ENCODE measurements at regions of chr9 and their contacts with region 1.

Region 1: GRCh38 chr9:137605121-137606004 is at the start of gene ARRDC1:
- DNase-seq: peak; percentile 96
- H3K4me3 Mint-ChIP-seq: peak within 1 kb of the TSS; percentile 78
- H3K27ac Mint-ChIP-seq: no peak within 1 kb of the TSS
- H3K4me1 Mint-ChIP-seq: peaks cover 20% of the 10 kb centered on the region
- H3K27me3 Mint-ChIP-seq: no peaks in the 10 kb centered on the region
- total RNA-seq, gene ARRDC1: 38.2 to 40.5 TPM

Region 2: DNA sequence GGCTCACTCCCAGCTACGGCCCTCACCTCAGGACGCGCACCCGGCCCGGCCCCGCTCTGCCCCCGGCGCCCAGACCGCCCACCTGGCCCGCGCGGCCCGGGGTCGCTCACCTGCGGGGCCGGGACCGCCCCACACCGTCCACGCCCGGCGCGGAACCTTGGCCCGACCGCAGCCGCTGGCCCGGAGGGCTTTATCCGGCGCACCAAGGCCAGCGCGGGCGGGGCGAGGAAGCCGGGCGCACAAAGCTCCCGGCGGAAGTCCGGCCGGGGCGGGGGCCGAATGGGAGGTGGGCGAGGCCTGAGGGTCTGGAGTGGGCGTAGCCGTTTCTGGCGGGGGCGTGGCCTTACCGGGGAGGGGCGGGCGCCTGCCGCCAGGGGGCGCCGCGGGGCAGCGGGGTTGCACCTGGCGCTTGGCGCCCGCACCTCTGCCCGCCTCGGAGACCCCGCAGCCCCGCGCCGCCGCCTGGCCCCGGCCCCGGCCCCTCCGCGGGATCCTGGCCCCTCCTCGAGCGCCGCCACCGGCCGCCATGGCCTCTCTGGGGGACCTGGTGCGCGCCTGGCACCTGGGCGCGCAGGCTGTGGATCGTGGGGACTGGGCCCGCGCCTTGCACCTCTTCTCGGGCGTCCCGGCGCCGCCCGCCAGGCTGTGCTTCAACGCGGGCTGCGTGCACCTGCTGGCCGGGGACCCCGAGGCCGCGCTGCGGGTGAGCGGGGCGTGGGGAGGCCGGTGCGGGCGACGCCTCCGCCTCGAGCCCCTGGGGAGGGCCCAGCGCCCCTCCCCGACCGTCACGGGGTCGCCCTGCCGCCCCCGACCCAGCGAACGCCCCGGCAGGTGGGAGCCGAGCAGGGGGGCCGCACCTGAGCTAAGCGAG is 182.1 kb before region 1 on chr9 and contains the starts of genes EXD3 and NOXA1:
- CTCF ChIA-PET with region 1: no interaction called
- POLR2A ChIA-PET with region 1: no interaction called
- intact Hi-C with region 1: loop called (anchors 1 kb)
- DNase-seq: peak; percentile 96
- H3K4me3 Mint-ChIP-seq: peak within 1 kb of the TSS; percentile 83
- H3K27ac Mint-ChIP-seq: peak within 1 kb of the TSS; percentile 71
- H3K4me1 Mint-ChIP-seq: peaks cover 8% of the 10 kb centered on the region
- H3K27me3 Mint-ChIP-seq: no peaks in the 10 kb centered on the region
- total RNA-seq, gene EXD3: 13.5 to 13.6 TPM
- total RNA-seq, gene NOXA1: 1.1 TPM

Region 3: GRCh38 chr9:137578518-137579258 is 26.7 kb before region 1 on chr9 and contains the start of gene DPH7:
- CTCF ChIA-PET with region 1: interaction called, 4 read pairs
- POLR2A ChIA-PET with region 1: no interaction called
- intact Hi-C with region 1: loop called (anchors 1 kb)
- DNase-seq: peak; percentile 96
- H3K4me3 Mint-ChIP-seq: peak within 1 kb of the TSS; percentile 71
- H3K27ac Mint-ChIP-seq: peak within 1 kb of the TSS; percentile 4
- H3K4me1 Mint-ChIP-seq: peaks cover 37% of the 10 kb centered on the region
- H3K27me3 Mint-ChIP-seq: no peaks in the 10 kb centered on the region
- total RNA-seq, gene DPH7: 26.6 to 30.3 TPM

Region 4: DNA sequence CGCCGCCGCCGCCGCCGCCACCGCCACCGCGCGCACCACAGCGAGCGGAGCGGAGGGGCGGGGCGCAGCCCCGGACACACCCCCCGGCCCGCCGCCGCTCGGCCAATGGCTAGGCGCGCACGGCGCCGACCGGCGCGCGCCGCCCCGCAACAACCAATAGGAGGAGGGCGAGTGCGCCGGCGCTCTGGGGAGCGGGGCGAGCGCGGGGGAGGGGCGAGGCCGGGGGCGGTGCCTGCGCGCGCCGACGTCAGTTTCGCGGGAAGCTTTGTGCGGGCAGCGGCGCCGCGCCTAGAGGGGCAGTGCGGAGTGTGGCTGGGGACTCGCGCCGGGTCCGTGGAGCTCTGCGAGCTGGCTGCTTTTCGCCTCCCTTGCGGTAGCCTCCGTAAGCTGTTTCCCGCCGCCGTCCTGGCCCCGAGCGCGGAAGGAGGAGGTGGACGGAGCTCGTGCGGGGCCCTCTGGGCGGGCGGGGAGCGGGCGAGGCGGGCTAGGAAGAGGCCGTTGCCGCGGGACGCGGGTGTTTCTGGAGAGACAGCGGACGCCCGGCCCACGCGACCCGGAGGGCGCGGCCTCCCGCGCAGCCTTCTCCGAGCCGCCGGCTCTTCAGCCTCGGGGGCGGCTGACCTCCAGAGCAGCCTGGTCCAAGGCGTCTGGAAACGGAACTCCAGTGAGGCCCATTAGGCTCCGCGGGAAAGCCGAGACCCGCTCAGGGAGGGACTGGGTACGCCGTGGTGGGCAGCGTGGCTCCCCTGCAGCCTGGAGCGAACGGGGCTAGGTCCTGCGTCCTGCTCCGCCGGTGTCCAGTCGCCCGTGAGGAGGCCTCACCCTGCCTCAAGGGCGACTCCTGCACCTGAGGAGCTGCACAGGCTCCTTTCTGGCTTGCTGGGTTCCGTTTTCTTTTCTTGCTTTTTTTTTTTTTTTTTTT is 14.6 kb before region 1 on chr9 and contains the start of gene ZMYND19:
- CTCF ChIA-PET with region 1: interaction called, 4 read pairs
- POLR2A ChIA-PET with region 1: interaction called, 3 read pairs
- intact Hi-C with region 1: loop called (anchors 1 kb)
- DNase-seq: peak; percentile 91
- H3K4me3 Mint-ChIP-seq: peak within 1 kb of the TSS; percentile 98
- H3K27ac Mint-ChIP-seq: peak within 1 kb of the TSS; percentile 86
- H3K4me1 Mint-ChIP-seq: peaks cover 22% of the 10 kb centered on the region
- H3K27me3 Mint-ChIP-seq: no peaks in the 10 kb centered on the region
- total RNA-seq, gene ZMYND19: 39.7 to 42.6 TPM

Region 5: DNA sequence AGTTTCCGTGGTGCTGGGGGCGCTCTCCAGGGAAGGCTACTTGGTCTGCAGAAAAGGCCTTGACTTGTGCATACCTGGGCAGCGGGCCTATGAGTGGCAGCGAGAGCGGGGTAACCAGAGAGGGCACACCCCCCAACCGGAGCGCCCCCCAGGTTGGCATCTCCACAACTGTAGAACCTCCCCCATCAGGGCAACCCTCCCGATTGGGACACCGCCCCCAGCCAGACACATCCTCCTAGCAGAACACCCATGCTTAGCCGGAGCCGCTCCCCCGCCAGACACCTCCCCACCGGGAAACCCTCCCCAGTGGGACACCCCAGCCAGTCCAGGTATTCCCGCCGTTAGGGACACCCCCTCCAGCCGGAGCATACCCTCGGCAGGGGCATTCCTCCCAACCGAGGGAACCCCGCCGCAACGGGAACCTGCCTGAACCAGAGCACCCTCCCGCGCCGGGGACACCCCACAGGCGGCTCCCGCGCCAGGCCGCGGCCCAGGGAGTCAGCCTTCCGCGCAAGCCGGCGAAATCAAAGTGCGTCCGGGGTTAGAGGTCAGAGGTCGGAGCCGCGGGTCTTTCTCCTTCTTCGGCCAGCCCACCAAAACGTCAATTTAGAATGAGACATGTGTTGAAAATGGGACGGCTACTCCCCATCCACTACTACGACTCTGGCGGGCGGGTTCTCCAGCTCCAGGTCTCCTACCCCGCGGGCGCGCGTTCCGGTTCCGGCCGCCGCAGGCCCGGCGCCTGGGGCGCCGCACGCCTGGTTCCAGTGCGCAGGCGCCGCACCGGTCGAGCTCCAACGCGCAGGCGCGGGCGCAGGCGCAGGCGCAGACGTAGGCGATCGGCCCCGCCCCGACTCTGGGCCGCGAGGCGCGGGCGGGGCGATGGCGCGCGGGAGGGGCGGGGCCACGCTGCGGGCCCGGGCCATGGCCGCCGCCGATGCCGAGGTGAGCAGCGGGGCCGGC is 13.0 kb after region 1 on chr9 and contains the start of gene EHMT1:
- CTCF ChIA-PET with region 1: no interaction called
- POLR2A ChIA-PET with region 1: interaction called, 4 read pairs
- intact Hi-C with region 1: loop called (anchors 1 kb)
- DNase-seq: peak; percentile 93
- H3K4me3 Mint-ChIP-seq: peak within 1 kb of the TSS; percentile 85
- H3K27ac Mint-ChIP-seq: peak within 1 kb of the TSS; percentile 87
- H3K4me1 Mint-ChIP-seq: peaks cover 41% of the 10 kb centered on the region
- H3K27me3 Mint-ChIP-seq: no peaks in the 10 kb centered on the region
- total RNA-seq, gene EHMT1: 66.0 to 70.8 TPM

Region 6: DNA sequence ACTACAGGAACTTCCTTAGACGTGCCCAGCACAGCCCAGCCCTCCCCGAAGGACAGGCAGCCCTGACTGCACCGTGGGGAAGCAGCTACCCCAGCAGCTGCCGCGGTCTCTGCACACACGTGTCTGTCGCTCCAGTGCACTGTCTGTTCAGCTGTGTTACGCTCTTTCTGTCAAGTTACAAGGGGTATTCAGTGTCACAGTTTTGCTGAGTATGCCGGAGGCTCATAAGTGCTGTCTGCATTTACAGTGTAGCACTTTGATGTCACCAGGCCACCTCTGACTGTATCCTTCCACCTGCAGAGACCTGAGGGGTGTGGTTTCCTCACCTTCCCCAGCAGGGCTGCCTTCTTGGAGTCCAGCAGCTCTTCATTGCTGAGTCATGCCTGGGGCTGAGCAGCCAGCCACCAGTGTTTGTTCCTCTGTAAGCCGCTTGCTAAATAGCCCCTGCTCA is 140.2 kb after region 1 on chr9:
- CTCF ChIA-PET with region 1: no interaction called
- POLR2A ChIA-PET with region 1: no interaction called
- intact Hi-C with region 1: no loop called
- DNase-seq: peak; percentile 59
- H3K4me3 Mint-ChIP-seq: no peak overlapping the region
- H3K27ac Mint-ChIP-seq: peak overlapping the region; percentile 69
- H3K4me1 Mint-ChIP-seq: peaks cover 14% of the 10 kb centered on the region
- H3K27me3 Mint-ChIP-seq: no peaks in the 10 kb centered on the region

Measured in activated CD4-positive, alpha-beta memory T cell treated with anti-CD3 and anti-CD28 coated beads for 36 hours (primary cell).